ENCODE measurements at regions of chr1 and their contacts with region 1.

Region 1: GRCh38 chr1:57474137-57474750 is 50.4 kb upstream of the DAB1 start:
- DNase-seq: no peak
- H3K4me3 ChIP-seq: no peak overlapping the region
- H3K27ac ChIP-seq: no peak overlapping the region
- H3K4me1 ChIP-seq: no peaks in the 10 kb centered on the region
- H3K27me3 ChIP-seq: no peaks in the 10 kb centered on the region
- CTCF ChIP-seq: no peak
- POLR2A ChIP-seq: no peak

Region 2: DNA sequence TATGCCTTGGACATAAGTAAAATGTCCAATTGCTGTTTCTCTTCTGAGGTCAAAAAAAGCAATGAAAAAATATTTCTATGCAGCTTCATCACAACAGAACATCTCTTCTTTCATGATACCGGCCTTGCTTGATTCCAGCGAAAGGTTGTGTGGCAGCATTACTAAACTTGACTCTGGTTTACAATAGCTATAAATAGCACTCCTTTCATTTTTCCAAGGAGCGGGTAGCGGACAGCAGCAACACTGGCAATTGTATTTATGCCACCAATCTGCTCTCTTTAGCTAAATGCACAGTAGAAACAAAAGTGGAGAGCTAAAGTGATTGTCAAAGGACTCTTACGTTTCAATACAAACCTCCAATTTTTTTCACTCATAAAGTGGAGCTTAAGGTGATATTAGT is 42.8 kb before region 1 on chr1:
- intact Hi-C with region 1: loop called (anchors 2 kb)
- DNase-seq: no peak
- H3K4me3 ChIP-seq: no peak overlapping the region
- H3K27ac ChIP-seq: no peak overlapping the region
- H3K4me1 ChIP-seq: no peaks in the 10 kb centered on the region
- H3K27me3 ChIP-seq: no peaks in the 10 kb centered on the region
- CTCF ChIP-seq: no peak
- POLR2A ChIP-seq: no peak

Region 3: GRCh38 chr1:57489358-57490036 is 15.3 kb after region 1 on chr1:
- intact Hi-C with region 1: no loop called
- DNase-seq: no peak
- H3K4me3 ChIP-seq: no peak overlapping the region
- H3K27ac ChIP-seq: no peak overlapping the region
- H3K4me1 ChIP-seq: no peaks in the 10 kb centered on the region
- H3K27me3 ChIP-seq: no peaks in the 10 kb centered on the region
- CTCF ChIP-seq: no peak
- POLR2A ChIP-seq: no peak